ENCODE measurements at regions of chr10 and their contacts with region 1.

Region 1: GRCh38 chr10:60944159-60944909 is at the start of gene RHOBTB1:
- DNase-seq: peak; percentile 72 to 87
- ATAC-seq: peak; percentile 84 to 87
- H3K4me3 ChIP-seq: peak within 1 kb of the TSS; percentile 87 to 93 (median 90)
- H3K27ac ChIP-seq: peak within 1 kb of the TSS; percentile 97 to 100 (median 99)
- H3K4me1 ChIP-seq: peaks cover 27 to 44% of the 10 kb centered on the region in 2 donors
- H3K27me3 ChIP-seq: no peaks in the 10 kb centered on the region
- CTCF ChIP-seq: no peak
- POLR2A ChIP-seq: peak; percentile 97 to 98
- total RNA-seq, gene RHOBTB1: 22.2 to 47.7 (median 33.5) TPM

Region 2: GRCh38 chr10:60870424-60870728 is 74.0 kb before region 1 on chr10:
- in situ Hi-C with region 1: no loop called
- intact Hi-C with region 1: loop called (anchors 2 kb)
- DNase-seq: no peak
- ATAC-seq: no peak
- H3K4me3 ChIP-seq: no peak overlapping the region
- H3K27ac ChIP-seq: peak overlapping the region; percentile 86 to 96 (median 90)
- H3K4me1 ChIP-seq: peaks cover 62 to 71% of the 10 kb centered on the region in 2 donors
- H3K27me3 ChIP-seq: no peaks in the 10 kb centered on the region
- CTCF ChIP-seq: peak in 3 of 5 experiments; percentile 23 to 49 (median 33)
- POLR2A ChIP-seq: no peak

Region 3: DNA sequence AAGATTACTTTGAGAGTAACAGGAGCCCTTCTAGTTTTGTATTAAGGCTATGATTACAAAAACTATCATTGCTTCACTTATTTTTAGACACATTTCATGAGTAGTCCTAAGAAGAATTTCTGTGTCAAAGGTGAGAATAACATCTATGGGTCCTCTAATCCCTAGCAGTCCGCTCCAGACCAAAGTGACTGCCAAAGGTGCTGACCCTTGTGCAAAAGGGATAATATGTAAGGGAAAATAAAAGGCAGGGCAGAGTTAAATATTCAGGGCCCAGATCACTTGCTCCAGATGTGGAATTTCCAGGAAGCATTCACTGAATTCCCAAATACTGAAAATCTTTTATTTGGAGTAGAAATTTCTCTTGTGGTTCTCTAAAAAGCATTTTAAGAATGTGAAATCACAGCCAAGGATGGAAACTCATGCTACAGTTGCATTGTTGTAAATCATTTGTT is 29.6 kb before region 1 on chr10:
- in situ Hi-C with region 1: no loop called
- intact Hi-C with region 1: loop called (anchors 2 kb)
- DNase-seq: peak in 1 of 2 donors; percentile 49
- ATAC-seq: peak; percentile 83 to 85
- H3K4me3 ChIP-seq: peak overlapping the region in 1 of 4 donors; percentile 24
- H3K27ac ChIP-seq: peak overlapping the region; percentile 82 to 96 (median 88)
- H3K4me1 ChIP-seq: peaks cover 61 to 70% of the 10 kb centered on the region in 2 donors
- H3K27me3 ChIP-seq: no peaks in the 10 kb centered on the region
- CTCF ChIP-seq: no peak
- POLR2A ChIP-seq: peak in 1 of 2 donors; percentile 36

Region 4: GRCh38 chr10:61024856-61025600 is 80.7 kb after region 1 on chr10:
- in situ Hi-C with region 1: no loop called
- intact Hi-C with region 1: no loop called
- DNase-seq: no peak
- ATAC-seq: no peak
- H3K4me3 ChIP-seq: no peak overlapping the region
- H3K27ac ChIP-seq: no peak overlapping the region
- H3K4me1 ChIP-seq: no peaks in the 10 kb centered on the region
- H3K27me3 ChIP-seq: no peaks in the 10 kb centered on the region
- CTCF ChIP-seq: peak in 1 of 5 experiments; percentile 38
- POLR2A ChIP-seq: no peak